CD8-positive, alpha-beta T cell (primary cell): ENCODE measurements at regions of chr22 and their contacts with region 1.

Region 1: GRCh38 chr22:24011735-24012068 is 598 bp downstream of the CABIN1 start:
- DNase-seq: no peak
- ATAC-seq: no peak
- H3K4me3 ChIP-seq: peak overlapping the region; percentile 71 to 87
- H3K4me3 Mint-ChIP-seq: peak overlapping the region; percentile 97
- H3K27ac ChIP-seq: peak overlapping the region; percentile 69 to 77
- H3K27ac Mint-ChIP-seq: peak overlapping the region; percentile 94
- H3K4me1 ChIP-seq: peaks cover 10% of the 10 kb centered on the region
- H3K4me1 Mint-ChIP-seq: peaks cover 40% of the 10 kb centered on the region
- H3K27me3 ChIP-seq: no peaks in the 10 kb centered on the region
- H3K27me3 Mint-ChIP-seq: no peaks in the 10 kb centered on the region
- CTCF ChIP-seq: no peak

Region 2: GRCh38 chr22:24023204-24023789 is 11.6 kb after region 1 on chr22:
- CTCF ChIA-PET with region 1: interaction called, 4 read pairs
- POLR2A ChIA-PET with region 1: interaction called, 5 read pairs
- intact Hi-C with region 1: loop called in 1 of 2 experiments (anchors 1 kb)
- DNase-seq: no peak
- ATAC-seq: no peak
- H3K4me3 ChIP-seq: no peak overlapping the region
- H3K4me3 Mint-ChIP-seq: no peak overlapping the region
- H3K27ac ChIP-seq: no peak overlapping the region
- H3K27ac Mint-ChIP-seq: peak overlapping the region; percentile 1
- H3K4me1 ChIP-seq: peaks cover 4% of the 10 kb centered on the region
- H3K4me1 Mint-ChIP-seq: peaks cover 47% of the 10 kb centered on the region
- H3K27me3 ChIP-seq: no peaks in the 10 kb centered on the region
- H3K27me3 Mint-ChIP-seq: no peaks in the 10 kb centered on the region
- CTCF ChIP-seq: no peak

Region 3: DNA sequence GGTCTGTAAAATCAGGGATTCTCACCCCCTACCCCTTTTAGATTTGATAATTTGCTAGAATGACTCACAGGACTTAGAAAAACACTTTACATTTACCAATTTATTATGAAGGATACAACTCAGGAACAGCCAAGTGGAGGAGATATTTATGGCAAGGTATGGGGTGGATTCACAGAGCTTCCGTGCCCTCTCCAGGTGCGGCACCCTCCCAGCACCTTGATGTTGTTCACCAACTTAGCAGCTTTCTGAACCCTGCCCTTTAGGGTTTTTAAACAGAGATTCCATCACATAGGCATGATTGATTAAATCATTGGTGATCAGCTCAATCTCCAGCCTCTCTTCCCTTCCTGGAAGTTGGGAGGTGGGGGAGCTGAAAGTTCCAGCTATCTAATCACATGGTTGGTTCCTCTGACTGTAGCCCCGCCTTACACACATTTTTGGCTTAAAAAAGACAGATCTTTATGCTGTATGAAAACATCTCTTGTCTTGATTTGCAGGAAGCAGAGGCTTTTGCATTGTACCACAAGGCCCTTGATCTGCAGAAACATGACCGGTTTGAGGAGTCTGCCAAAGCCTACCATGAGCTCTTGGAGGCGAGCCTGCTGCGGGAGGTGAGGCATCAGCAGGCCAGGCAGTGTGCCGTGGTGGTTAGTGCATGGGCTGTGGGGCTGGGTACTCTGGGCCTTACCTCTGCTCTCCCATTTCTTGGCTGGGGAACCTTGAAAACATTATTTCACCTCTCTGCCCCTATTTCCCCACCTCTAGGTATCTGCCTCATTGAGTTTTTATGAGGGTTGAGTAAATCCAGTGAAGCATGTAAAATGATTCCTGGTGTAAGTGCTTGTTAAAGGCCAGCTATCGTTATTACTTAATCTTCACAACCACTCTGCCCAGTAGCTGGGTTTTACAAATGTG is 26.4 kb after region 1 on chr22:
- CTCF ChIA-PET with region 1: interaction called, 9 read pairs
- POLR2A ChIA-PET with region 1: interaction called, 44 read pairs
- intact Hi-C with region 1: loop called (anchors 1 to 2 kb)
- DNase-seq: peak in 8 of 9 experiments; percentile 15 to 75 (median 56)
- ATAC-seq: peak; percentile 91
- H3K4me3 ChIP-seq: peak overlapping the region in 1 of 2 experiments; percentile 0
- H3K4me3 Mint-ChIP-seq: peak overlapping the region; percentile 53
- H3K27ac ChIP-seq: peak overlapping the region; percentile 23 to 48
- H3K27ac Mint-ChIP-seq: peak overlapping the region; percentile 93
- H3K4me1 ChIP-seq: peaks cover 61% of the 10 kb centered on the region
- H3K4me1 Mint-ChIP-seq: peaks cover 73% of the 10 kb centered on the region
- H3K27me3 ChIP-seq: no peaks in the 10 kb centered on the region
- H3K27me3 Mint-ChIP-seq: no peaks in the 10 kb centered on the region
- CTCF ChIP-seq: no peak